ENCODE measurements at regions of chr18 and their contacts with region 1.

Region 1: GRCh38 chr18:33761363-33761762 is 183.3 kb downstream of the ASXL3 start:
- DNase-seq: no peak
- H3K4me3 Mint-ChIP-seq: no peak overlapping the region
- H3K27ac Mint-ChIP-seq: no peak overlapping the region
- H3K4me1 Mint-ChIP-seq: no peaks in the 10 kb centered on the region
- H3K27me3 Mint-ChIP-seq: no peaks in the 10 kb centered on the region

Region 2: DNA sequence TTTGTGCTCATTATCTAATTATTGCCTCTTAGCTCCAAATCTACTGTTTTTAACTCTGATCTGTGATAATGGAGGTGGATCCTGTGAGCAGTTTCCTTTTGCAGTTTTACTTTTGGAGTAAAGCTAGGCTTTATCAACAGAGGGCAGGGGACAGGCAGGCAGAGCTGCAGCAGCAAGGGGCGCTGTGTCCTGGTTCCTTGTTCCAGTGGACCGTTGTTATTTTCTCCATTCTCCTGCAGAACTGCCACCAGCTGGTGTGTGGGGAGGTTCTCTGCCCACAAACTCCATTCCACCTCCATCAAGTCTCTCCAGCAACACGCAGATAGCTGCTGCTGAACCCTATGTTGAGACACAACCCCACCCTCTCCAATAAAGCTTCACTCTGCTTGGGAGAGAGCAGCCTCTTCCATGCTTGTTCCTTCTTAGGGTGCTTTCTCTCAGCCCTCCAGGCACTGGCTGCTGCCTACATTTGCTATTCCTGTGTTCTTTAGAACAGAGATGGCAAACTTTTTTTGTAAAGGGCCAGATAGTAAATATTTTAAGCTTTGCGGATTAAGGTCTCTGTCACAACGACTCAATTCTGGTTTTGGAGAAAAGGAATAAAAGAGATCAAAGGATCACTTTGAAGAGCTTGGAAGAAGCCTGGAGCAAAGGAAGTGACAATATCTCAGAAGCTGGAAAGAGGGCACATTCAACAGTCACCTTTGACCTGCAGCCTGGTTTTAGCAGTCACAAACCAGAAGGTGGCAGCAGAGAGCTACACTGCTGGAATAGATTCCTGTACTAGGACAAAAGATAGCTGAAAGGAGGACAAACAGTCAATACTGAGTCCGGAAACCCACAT is 529.7 kb before region 1 on chr18:
- intact Hi-C with region 1: loop called (anchors 5 kb)
- DNase-seq: peak; percentile 29
- H3K4me3 Mint-ChIP-seq: no peak overlapping the region
- H3K27ac Mint-ChIP-seq: no peak overlapping the region
- H3K4me1 Mint-ChIP-seq: peaks cover 4% of the 10 kb centered on the region
- H3K27me3 Mint-ChIP-seq: no peaks in the 10 kb centered on the region

Region 3: GRCh38 chr18:33720133-33720532 is 41.2 kb before region 1 on chr18:
- intact Hi-C with region 1: no loop called
- DNase-seq: no peak
- H3K4me3 Mint-ChIP-seq: no peak overlapping the region
- H3K27ac Mint-ChIP-seq: no peak overlapping the region
- H3K4me1 Mint-ChIP-seq: no peaks in the 10 kb centered on the region
- H3K27me3 Mint-ChIP-seq: no peaks in the 10 kb centered on the region

Region 4: GRCh38 chr18:33923980-33924379 is 162.6 kb after region 1 on chr18:
- intact Hi-C with region 1: no loop called
- DNase-seq: no peak
- H3K4me3 Mint-ChIP-seq: no peak overlapping the region
- H3K27ac Mint-ChIP-seq: no peak overlapping the region
- H3K4me1 Mint-ChIP-seq: no peaks in the 10 kb centered on the region
- H3K27me3 Mint-ChIP-seq: no peaks in the 10 kb centered on the region

Measured in activated T-helper 2 cell treated with anti-CD3 and anti-CD28 coated beads, Interferon-gamma antibody, Interleukin-2, Interleukin-4, amounts not matched to agents 10 μg/mL and 5 μg/mL and 100 μg/mL, durations not matched to agents 14 hours and 24 hours and 36 hours (primary cell).